ENCODE measurements at regions of chr7 and their contacts with region 1.

Region 1: GRCh38 chr7:30983042-30983913 is 19.5 kb downstream of the GHRHR start:
- DNase-seq: peak; percentile 77
- H3K4me3 Mint-ChIP-seq: no peak overlapping the region
- H3K27ac Mint-ChIP-seq: no peak overlapping the region
- H3K4me1 Mint-ChIP-seq: peaks cover 4% of the 10 kb centered on the region
- H3K27me3 Mint-ChIP-seq: peaks cover 16% of the 10 kb centered on the region

Region 2: GRCh38 chr7:30996256-30996655 is 13.0 kb after region 1 on chr7:
- CTCF ChIA-PET with region 1: no interaction called
- POLR2A ChIA-PET with region 1: no interaction called
- DNase-seq: no peak
- H3K4me3 Mint-ChIP-seq: no peak overlapping the region
- H3K27ac Mint-ChIP-seq: no peak overlapping the region
- H3K4me1 Mint-ChIP-seq: no peaks in the 10 kb centered on the region
- H3K27me3 Mint-ChIP-seq: no peaks in the 10 kb centered on the region

Region 3: GRCh38 chr7:31122649-31123058 is 139.4 kb after region 1 on chr7:
- CTCF ChIA-PET with region 1: interaction called, 19 read pairs
- POLR2A ChIA-PET with region 1: interaction called, 6 read pairs
- DNase-seq: peak; percentile 39
- H3K4me3 Mint-ChIP-seq: no peak overlapping the region
- H3K27ac Mint-ChIP-seq: no peak overlapping the region
- H3K4me1 Mint-ChIP-seq: no peaks in the 10 kb centered on the region
- H3K27me3 Mint-ChIP-seq: peaks cover 2% of the 10 kb centered on the region

Region 4: GRCh38 chr7:31134246-31135188 is 151.2 kb after region 1 on chr7:
- CTCF ChIA-PET with region 1: interaction called, 11 read pairs
- POLR2A ChIA-PET with region 1: interaction called, 3 read pairs
- DNase-seq: peak; percentile 64
- H3K4me3 Mint-ChIP-seq: no peak overlapping the region
- H3K27ac Mint-ChIP-seq: no peak overlapping the region
- H3K4me1 Mint-ChIP-seq: no peaks in the 10 kb centered on the region
- H3K27me3 Mint-ChIP-seq: no peaks in the 10 kb centered on the region

Measured in activated CD4-positive, alpha-beta T cell treated with anti-CD3 and anti-CD28 coated beads, Interleukin-2, amount 10 ng/mL, durations not matched to agents 7 days and 5 days (primary cell).